Activated CD4-positive, alpha-beta T cell treated with anti-CD3 and anti-CD28 coated beads, Interleukin-2, amount 10 ng/mL, durations not matched to agents 7 days and 5 days (primary cell): ENCODE measurements at regions of chr14 and their contacts with region 1.

Region 1: GRCh38 chr14:24188251-24189058 is at the start of gene IPO4:
- DNase-seq: peak; percentile 97
- H3K4me3 Mint-ChIP-seq: peak within 1 kb of the TSS; percentile 89
- H3K27ac Mint-ChIP-seq: peak within 1 kb of the TSS; percentile 93
- H3K4me1 Mint-ChIP-seq: peaks cover 56% of the 10 kb centered on the region
- H3K27me3 Mint-ChIP-seq: no peaks in the 10 kb centered on the region
- total RNA-seq, gene IPO4: 45.3 to 48.7 TPM

Region 2: DNA sequence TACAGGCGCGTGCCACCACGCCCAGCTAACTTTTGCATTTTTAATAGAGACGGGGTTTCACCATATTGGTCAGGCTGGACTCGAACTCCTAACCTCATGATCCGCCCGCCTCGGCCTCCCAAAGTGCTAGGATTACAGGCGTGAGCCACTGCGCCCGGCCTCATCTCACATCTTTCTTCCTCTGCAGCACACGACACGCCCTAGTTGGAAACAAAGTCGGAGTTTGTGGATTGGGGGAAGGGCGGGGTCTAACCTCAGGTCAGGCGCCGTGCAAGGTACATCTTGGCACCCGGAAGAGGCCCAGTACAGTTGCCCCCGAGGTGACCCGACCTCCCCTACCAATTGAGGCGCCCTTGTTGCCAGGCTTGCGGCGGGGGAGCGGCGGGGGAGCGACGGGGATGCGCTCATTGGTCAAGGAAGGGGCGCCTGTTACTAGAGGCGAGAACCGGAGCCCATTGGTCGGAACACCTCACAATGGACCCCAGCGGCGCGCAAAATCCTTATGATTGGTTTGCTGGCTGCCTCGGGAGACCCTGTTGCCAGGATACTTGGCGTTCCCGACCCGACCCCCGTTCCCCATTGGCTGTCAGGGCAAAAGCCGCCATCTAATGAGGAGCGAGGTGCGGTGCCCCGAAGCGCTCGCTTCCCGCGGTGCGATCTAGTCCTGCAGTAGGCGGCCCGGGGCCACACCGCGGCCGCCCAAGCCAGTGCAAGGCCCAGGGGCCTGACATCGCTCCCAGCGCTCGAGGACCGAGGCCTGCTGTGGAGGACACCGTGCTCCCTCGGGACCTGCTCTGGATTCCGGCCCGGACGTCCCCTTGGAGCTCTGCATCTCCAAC is 16.8 kb before region 1 on chr14 and contains the start of gene REC8:
- CTCF ChIA-PET with region 1: interaction called, 13 read pairs
- POLR2A ChIA-PET with region 1: no interaction called
- DNase-seq: peak; percentile 67
- H3K4me3 Mint-ChIP-seq: peak within 1 kb of the TSS; percentile 69
- H3K27ac Mint-ChIP-seq: peak within 1 kb of the TSS; percentile 86
- H3K4me1 Mint-ChIP-seq: peaks cover 55% of the 10 kb centered on the region
- H3K27me3 Mint-ChIP-seq: no peaks in the 10 kb centered on the region
- total RNA-seq, gene REC8: 52.8 to 61.0 TPM